Mammary epithelial cell (primary cell): ENCODE measurements at regions of chr1 and their contacts with region 1.

Region 1: DNA sequence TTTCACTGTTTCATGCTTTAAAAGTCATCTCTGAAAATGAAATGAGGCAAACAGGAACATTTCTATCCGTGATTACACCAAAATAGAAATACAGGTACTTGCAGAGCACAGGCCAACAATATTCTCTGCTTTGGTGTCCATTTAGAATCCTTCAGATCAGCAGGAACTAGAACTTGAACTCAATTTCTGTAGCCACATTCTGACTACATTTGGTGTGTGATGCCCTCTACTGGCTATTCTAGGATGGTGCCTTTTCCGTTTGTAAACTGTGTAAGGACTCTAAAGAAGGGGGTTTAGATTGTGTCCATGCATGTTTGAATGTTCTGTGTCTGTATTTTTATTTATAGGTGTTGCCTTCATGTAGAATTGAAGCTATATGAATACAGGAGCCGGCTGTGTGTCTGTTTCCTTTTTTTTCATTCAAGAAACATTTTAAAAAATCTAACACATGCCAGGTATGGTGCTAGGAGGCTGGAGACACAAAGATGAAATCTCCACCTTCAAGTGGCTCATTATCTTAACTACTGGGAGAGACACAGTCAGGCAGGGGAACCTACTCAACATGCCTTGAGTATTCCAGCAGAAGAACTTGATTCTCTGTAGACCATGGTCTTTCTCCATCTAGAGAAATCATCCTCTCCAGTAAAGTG is 7.6 kb upstream of the ZNF326 start:
- DNase-seq: peak; percentile 66
- H3K4me3 ChIP-seq: no peak overlapping the region
- H3K27ac ChIP-seq: no peak overlapping the region
- H3K4me1 ChIP-seq: peaks cover 20% of the 10 kb centered on the region
- H3K27me3 ChIP-seq: no peaks in the 10 kb centered on the region
- CTCF ChIP-seq: peak; percentile 81 to 82

Region 2: GRCh38 chr1:89780721-89781120 is 206.6 kb before region 1 on chr1:
- CTCF ChIA-PET with region 1: no interaction called
- dilution Hi-C with region 1: no loop called
- in situ Hi-C with region 1: no loop called
- intact Hi-C with region 1: loop called (anchors 1 kb)
- DNase-seq: peak; percentile 50
- H3K4me3 ChIP-seq: no peak overlapping the region
- H3K27ac ChIP-seq: no peak overlapping the region
- H3K4me1 ChIP-seq: no peaks in the 10 kb centered on the region
- H3K27me3 ChIP-seq: no peaks in the 10 kb centered on the region
- CTCF ChIP-seq: peak; percentile 44 to 55

Region 3: GRCh38 chr1:89820422-89821321 is 166.6 kb before region 1 on chr1 and contains the start of gene LRRC8D:
- CTCF ChIA-PET with region 1: interaction called, 3 read pairs
- dilution Hi-C with region 1: no loop called
- in situ Hi-C with region 1: no loop called
- intact Hi-C with region 1: loop called (anchors 5 kb)
- DNase-seq: peak; percentile 74
- H3K4me3 ChIP-seq: peak within 1 kb of the TSS; percentile 56 to 73 (median 65)
- H3K27ac ChIP-seq: no peak within 1 kb of the TSS
- H3K4me1 ChIP-seq: peaks cover 15% of the 10 kb centered on the region
- H3K27me3 ChIP-seq: no peaks in the 10 kb centered on the region
- CTCF ChIP-seq: no peak
- total RNA-seq, gene LRRC8D: 39.5 to 47.7 TPM

Region 4: DNA sequence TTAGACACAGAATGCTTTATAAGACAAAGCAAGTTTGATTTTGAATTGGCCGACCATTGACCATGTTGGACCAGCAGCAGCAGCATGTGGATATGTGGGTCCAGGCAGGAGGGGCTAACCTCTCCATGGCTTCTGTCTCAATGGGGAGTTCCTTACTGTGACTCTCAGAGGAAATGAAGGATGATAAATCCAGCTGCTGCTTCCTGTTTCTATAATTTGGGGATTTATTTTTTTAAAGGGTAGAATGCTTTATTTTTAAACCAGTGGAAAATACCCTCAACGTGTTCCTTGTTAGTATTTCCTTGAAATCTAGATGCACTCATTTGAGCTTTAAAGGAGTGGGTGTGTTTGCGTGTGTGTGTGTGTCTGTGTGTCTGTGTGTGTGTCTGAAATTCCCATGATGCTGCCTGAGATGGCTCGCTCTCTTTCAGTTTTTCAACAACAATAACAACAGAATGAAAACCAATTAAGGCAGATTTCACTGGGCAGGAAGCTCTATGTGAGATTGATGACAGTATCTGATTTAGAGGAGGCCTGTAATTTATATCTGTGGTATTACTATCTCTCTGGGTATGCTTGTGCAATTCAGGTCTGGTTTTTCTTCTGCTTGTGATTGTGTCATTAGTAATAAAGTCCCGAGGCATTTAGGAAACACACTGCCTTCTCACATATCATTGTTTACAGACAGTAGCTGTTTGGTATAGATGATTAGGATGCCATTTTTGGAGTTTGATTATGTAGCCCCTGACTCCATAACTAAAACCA is 78.4 kb before region 1 on chr1:
- CTCF ChIA-PET with region 1: interaction called, 3 read pairs
- dilution Hi-C with region 1: loop called (anchors 5 kb)
- in situ Hi-C with region 1: no loop called
- intact Hi-C with region 1: no loop called
- DNase-seq: peak; percentile 74
- H3K4me3 ChIP-seq: no peak overlapping the region
- H3K27ac ChIP-seq: peak overlapping the region; percentile 25
- H3K4me1 ChIP-seq: peaks cover 31% of the 10 kb centered on the region
- H3K27me3 ChIP-seq: no peaks in the 10 kb centered on the region
- CTCF ChIP-seq: no peak

Region 5: DNA sequence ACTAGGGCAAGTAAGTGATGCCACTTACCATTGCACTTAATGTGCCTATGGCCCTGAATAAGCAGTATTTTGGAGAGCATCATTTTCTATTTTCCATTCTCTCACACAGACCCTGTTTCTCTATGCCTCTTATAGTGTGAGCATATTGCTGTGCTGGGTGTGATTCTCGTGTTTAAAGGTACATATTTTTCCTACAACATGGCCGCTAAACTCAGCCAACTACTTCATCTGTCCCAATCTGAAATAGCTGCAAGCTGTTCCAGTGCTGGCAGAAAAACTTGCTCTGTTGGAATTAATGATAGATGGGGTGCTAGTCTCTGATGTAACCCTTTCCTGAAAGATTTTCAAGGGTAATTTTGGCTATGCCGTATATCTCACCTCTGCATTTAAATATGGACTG is 105.1 kb after region 1 on chr1:
- CTCF ChIA-PET with region 1: no interaction called
- dilution Hi-C with region 1: loop called (anchors 5 kb)
- in situ Hi-C with region 1: no loop called
- intact Hi-C with region 1: no loop called
- DNase-seq: no peak
- H3K4me3 ChIP-seq: no peak overlapping the region
- H3K27ac ChIP-seq: no peak overlapping the region
- H3K4me1 ChIP-seq: no peaks in the 10 kb centered on the region
- H3K27me3 ChIP-seq: peaks cover 2% of the 10 kb centered on the region
- CTCF ChIP-seq: no peak